ENCODE measurements at regions of chr6 and their contacts with region 1.

Region 1: DNA sequence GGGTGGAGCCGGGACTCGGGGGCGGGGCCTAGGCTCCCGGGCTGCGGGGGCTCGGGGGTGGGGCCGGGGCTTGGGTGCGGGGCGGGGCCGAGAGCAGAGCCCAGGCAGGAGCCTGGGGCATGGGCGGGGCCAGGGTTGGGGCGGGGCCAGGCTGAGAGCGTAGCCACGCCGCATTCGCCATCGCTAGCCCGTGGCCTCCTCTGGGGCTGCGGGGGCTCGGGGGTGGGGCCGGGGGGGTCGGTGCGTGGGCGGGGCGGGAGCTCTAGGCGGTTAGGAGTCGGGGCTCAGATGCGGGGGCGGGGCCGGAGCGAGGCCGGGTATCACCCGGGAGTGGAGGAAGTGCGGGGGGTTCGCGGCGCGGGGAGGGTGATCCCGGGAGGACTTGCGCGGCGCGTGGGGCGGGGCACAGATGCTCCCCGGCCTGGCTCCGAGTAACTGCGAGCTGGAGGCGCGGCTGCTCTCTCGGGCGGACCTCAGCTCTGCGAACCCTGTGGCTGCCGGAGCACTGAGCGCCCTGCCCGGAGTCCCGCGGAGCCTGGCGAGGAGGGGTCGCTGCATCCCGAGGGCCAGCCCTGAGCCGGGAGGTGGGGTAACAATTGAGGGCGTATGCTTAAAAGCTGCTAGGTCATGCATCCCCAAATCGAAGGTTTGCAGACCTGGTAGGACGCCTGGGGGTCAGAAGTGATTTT is 434 bp upstream of the ECI2 start:
- DNase-seq: peak; percentile 96
- H3K4me3 Mint-ChIP-seq: peak overlapping the region; percentile 80
- H3K27ac Mint-ChIP-seq: peak overlapping the region; percentile 78
- H3K4me1 Mint-ChIP-seq: peaks cover 41% of the 10 kb centered on the region
- H3K27me3 Mint-ChIP-seq: no peaks in the 10 kb centered on the region

Region 2: DNA sequence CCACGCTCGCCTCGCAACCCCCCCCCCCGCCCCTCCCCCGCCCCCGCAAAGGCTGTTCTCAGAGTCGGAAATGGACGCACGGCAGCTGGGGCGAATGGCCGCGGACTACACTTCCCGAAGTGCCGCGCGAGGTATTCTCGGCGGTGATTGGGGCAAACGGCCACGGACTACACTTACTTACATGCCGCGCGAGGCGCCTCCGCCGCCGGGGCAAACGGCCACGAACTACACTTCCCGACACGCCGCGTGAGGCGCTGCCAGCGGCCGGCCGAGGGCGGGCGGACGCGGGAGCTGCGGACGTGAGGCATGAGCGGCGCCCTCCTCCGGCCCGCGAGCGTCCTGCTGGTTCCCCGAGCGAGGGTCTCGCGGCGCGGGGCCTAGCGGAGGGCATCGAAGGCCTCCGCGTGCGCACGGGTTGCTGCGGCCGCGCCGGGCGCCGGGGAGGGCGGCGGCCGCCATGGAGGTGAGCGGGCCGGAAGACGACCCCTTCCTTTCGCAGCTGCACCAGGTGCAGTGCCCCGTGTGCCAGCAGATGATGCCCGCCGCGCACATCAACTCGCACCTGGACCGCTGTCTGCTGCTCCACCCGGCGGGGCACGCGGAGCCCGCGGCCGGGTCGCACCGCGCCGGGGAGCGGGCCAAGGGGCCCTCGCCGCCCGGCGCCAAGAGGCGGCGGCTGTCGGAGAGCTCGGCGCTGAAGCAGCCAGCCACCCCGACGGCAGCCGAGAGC is 1370.5 kb before region 1 on chr6 and contains the start of gene WRNIP1:
- CTCF ChIA-PET with region 1: no interaction called
- POLR2A ChIA-PET with region 1: no interaction called
- intact Hi-C with region 1: loop called (anchors 10 kb)
- DNase-seq: peak; percentile 98
- H3K4me3 Mint-ChIP-seq: peak within 1 kb of the TSS; percentile 92
- H3K27ac Mint-ChIP-seq: peak within 1 kb of the TSS; percentile 97
- H3K4me1 Mint-ChIP-seq: peaks cover 45% of the 10 kb centered on the region
- H3K27me3 Mint-ChIP-seq: no peaks in the 10 kb centered on the region
- total RNA-seq, gene WRNIP1: 32.7 to 32.8 TPM

Region 3: GRCh38 chr6:3868544-3868943 is 267.3 kb before region 1 on chr6:
- CTCF ChIA-PET with region 1: no interaction called
- POLR2A ChIA-PET with region 1: no interaction called
- intact Hi-C with region 1: loop called (anchors 5 kb)
- DNase-seq: no peak
- H3K4me3 Mint-ChIP-seq: peak overlapping the region; percentile 24
- H3K27ac Mint-ChIP-seq: peak overlapping the region; percentile 92
- H3K4me1 Mint-ChIP-seq: peaks cover 45% of the 10 kb centered on the region
- H3K27me3 Mint-ChIP-seq: peaks cover 8% of the 10 kb centered on the region

Region 4: DNA sequence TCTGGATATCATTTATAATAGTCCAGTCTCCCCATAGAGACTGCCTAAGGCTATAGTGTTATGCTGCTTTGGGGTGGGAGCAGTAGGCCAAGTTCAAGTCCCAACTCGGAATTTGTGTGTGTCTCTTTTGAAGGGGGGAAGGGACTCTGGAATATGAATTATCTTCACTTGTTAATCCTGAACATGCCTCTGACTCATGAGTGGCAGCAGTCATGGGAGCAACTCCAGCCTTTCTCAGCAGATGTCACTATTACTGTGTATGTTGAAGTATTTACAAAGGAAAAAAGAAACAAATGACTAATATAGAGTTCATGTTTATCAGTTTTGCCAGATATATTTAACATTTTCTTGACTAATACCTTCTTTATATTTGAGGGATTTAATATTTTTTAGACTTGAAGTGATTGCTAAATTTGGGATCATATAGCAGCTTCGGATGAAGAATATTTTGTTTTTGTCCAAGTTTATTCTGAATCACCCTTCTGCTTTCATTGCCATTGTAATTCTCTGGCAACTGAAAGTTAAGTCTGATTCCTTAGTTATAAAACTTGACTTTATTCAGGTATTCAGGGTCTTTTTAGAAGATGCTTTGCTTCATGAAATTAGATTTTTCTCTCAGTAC is 80.3 kb before region 1 on chr6:
- CTCF ChIA-PET with region 1: interaction called, 5 read pairs
- POLR2A ChIA-PET with region 1: interaction called, 7 read pairs
- intact Hi-C with region 1: loop called (anchors 1 kb)
- DNase-seq: no peak
- H3K4me3 Mint-ChIP-seq: no peak overlapping the region
- H3K27ac Mint-ChIP-seq: no peak overlapping the region
- H3K4me1 Mint-ChIP-seq: peaks cover 30% of the 10 kb centered on the region
- H3K27me3 Mint-ChIP-seq: no peaks in the 10 kb centered on the region

Region 5: GRCh38 chr6:4102687-4103244 is 33.0 kb before region 1 on chr6:
- CTCF ChIA-PET with region 1: no interaction called
- POLR2A ChIA-PET with region 1: no interaction called
- intact Hi-C with region 1: no loop called
- DNase-seq: no peak
- H3K4me3 Mint-ChIP-seq: no peak overlapping the region
- H3K27ac Mint-ChIP-seq: no peak overlapping the region
- H3K4me1 Mint-ChIP-seq: no peaks in the 10 kb centered on the region
- H3K27me3 Mint-ChIP-seq: peaks cover 3% of the 10 kb centered on the region

Region 6: DNA sequence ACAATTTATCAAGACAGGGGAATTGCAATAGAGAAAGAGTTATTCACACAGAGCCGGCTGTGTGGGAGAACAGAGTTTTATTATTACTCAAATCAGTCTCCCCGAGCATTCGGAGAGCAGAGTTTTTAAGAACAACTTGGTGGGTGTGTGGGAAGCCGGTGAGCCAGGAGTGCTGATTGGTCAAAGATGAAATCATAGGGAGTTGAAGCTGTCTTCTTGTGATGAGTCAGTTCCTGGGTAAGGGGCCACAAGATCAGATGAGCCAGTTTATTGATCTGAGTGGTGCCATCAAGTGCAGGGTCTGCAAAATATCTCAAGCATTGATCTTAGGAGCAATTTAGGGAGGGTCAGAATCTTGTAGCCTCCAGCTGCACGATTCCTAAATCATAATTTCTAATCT is 49.6 kb after region 1 on chr6:
- CTCF ChIA-PET with region 1: no interaction called
- POLR2A ChIA-PET with region 1: interaction called, 5 read pairs
- intact Hi-C with region 1: loop called (anchors 1 kb)
- DNase-seq: peak; percentile 80
- H3K4me3 Mint-ChIP-seq: peak overlapping the region; percentile 21
- H3K27ac Mint-ChIP-seq: peak overlapping the region; percentile 83
- H3K4me1 Mint-ChIP-seq: peaks cover 21% of the 10 kb centered on the region
- H3K27me3 Mint-ChIP-seq: peaks cover 2% of the 10 kb centered on the region

Region 7: DNA sequence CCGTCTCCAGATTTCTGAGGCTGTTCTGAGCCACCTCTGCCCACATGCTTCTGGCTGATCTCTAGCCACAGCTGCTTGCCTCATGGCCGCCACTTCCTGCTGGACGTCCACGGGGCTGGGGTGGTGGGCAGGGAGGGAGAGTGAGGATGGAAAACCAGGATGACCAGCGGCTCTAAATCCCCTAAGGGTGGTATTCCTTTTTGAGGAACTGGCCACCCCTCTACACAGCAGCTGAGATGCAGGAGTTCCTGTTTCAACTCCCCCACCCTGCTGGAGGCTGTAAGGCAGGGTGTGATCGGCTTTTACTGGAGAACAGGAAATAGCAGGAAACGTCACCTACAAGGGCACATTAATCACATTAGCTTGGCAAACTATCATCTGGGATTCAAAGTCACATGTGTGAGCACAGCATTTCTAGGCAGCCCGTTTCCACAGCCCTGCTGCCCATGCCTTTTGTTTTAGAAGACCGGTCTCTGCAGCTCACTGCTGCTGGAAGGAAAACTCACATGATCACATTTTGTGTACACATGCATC is 181.1 kb after region 1 on chr6:
- CTCF ChIA-PET with region 1: no interaction called
- POLR2A ChIA-PET with region 1: no interaction called
- intact Hi-C with region 1: no loop called
- DNase-seq: no peak
- H3K4me3 Mint-ChIP-seq: no peak overlapping the region
- H3K27ac Mint-ChIP-seq: no peak overlapping the region
- H3K4me1 Mint-ChIP-seq: no peaks in the 10 kb centered on the region
- H3K27me3 Mint-ChIP-seq: peaks cover 17% of the 10 kb centered on the region